ENCODE measurements at regions of chr6 and their contacts with region 1.

Region 1: GRCh38 chr6:151753605-151754004 is 53.9 kb upstream of the ESR1 start:
- DNase-seq: no peak
- ATAC-seq: no peak
- H3K4me3 ChIP-seq: no peak overlapping the region
- H3K27ac ChIP-seq: no peak overlapping the region
- H3K4me1 ChIP-seq: peaks cover 14% of the 10 kb centered on the region
- H3K27me3 ChIP-seq: peaks cover 0 to 8% of the 10 kb centered on the region in 2 experiments; a peak in 1 of 5 replicates
- CTCF ChIP-seq: no peak
- EP300 ChIP-seq: no peak
- POLR2A ChIP-seq: no peak
- RAD21 ChIP-seq: no peak

Region 2: GRCh38 chr6:152351110-152351509 is 597.5 kb after region 1 on chr6:
- CTCF ChIA-PET with region 1: no interaction called
- POLR2A ChIA-PET with region 1: no interaction called
- in situ Hi-C with region 1: no loop called
- intact Hi-C with region 1: loop called (anchors 5 kb)
- DNase-seq: no peak
- ATAC-seq: no peak
- H3K4me3 ChIP-seq: no peak overlapping the region
- H3K27ac ChIP-seq: no peak overlapping the region
- H3K4me1 ChIP-seq: no peaks in the 10 kb centered on the region
- H3K27me3 ChIP-seq: no peaks in the 10 kb centered on the region
- CTCF ChIP-seq: no peak
- EP300 ChIP-seq: no peak
- POLR2A ChIP-seq: no peak
- RAD21 ChIP-seq: no peak

Region 3: DNA sequence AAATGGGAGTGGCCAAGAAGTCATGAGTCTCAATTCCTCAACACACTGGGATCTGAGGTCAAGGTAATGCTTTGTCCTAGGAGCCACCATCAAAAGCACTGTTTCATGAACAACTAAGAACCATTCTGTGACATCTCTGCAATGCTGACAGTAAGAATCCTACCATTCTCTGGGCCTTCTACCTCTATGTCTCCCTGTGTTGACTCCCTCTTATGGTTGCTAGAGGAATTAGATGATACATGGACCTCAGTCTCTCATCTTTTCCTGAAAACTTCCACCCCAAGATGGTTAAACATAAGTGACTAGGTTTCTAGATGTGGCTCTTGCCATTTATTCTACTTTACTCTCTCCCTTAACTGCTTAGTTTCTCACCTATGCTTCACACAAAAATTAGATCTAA is 1239.8 kb after region 1 on chr6:
- CTCF ChIA-PET with region 1: no interaction called
- POLR2A ChIA-PET with region 1: no interaction called
- in situ Hi-C with region 1: no loop called
- intact Hi-C with region 1: no loop called
- DNase-seq: peak; percentile 30
- ATAC-seq: peak; percentile 85
- H3K4me3 ChIP-seq: no peak overlapping the region
- H3K27ac ChIP-seq: no peak overlapping the region
- H3K4me1 ChIP-seq: no peaks in the 10 kb centered on the region
- H3K27me3 ChIP-seq: no peaks in the 10 kb centered on the region
- CTCF ChIP-seq: peak; percentile 26; the same call in 1 of the 2 replicates
- EP300 ChIP-seq: no peak
- POLR2A ChIP-seq: no peak
- RAD21 ChIP-seq: no peak